ENCODE measurements at regions of chr14 and their contacts with region 1.

Region 1: DNA sequence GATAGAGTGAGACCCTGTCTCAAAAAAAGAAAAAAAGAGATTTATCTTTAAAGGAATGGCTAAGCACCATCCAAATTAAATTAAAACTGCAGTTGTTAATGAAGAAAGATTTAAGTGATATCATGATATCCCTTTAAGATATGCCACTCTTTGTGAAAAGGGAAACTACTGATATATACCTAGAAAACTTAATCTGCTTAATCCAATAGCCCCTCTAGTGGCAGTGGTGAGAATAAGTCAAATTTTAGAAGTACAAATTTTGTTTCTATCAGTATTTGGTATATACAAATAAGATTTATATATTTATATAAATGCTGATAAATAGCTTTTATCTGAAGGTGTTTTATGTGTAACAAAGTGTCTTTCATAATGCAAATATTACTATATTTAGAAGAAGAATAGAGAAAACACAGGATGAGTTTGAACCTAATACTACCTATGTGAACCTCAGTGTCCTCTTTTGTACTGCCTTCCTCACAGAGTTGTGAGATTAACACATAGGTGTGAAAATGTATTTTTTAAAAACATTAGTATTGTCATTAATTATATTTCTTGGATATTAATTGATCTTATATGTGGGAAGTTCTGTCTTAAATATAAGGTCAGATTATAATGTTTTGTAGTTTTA is 51.4 kb upstream of the GARIN2 start:
- DNase-seq: no peak
- H3K4me3 Mint-ChIP-seq: no peak overlapping the region
- H3K27ac Mint-ChIP-seq: no peak overlapping the region
- H3K4me1 Mint-ChIP-seq: peaks cover 28% of the 10 kb centered on the region
- H3K27me3 Mint-ChIP-seq: no peaks in the 10 kb centered on the region

Region 2: GRCh38 chr14:65704850-65705249 is 1433.0 kb before region 1 on chr14:
- CTCF ChIA-PET with region 1: no interaction called
- intact Hi-C with region 1: loop called (anchors 10 kb)
- DNase-seq: peak; percentile 75
- H3K4me3 Mint-ChIP-seq: no peak overlapping the region
- H3K27ac Mint-ChIP-seq: peak overlapping the region; percentile 72
- H3K4me1 Mint-ChIP-seq: peaks cover 12% of the 10 kb centered on the region
- H3K27me3 Mint-ChIP-seq: no peaks in the 10 kb centered on the region

Region 3: DNA sequence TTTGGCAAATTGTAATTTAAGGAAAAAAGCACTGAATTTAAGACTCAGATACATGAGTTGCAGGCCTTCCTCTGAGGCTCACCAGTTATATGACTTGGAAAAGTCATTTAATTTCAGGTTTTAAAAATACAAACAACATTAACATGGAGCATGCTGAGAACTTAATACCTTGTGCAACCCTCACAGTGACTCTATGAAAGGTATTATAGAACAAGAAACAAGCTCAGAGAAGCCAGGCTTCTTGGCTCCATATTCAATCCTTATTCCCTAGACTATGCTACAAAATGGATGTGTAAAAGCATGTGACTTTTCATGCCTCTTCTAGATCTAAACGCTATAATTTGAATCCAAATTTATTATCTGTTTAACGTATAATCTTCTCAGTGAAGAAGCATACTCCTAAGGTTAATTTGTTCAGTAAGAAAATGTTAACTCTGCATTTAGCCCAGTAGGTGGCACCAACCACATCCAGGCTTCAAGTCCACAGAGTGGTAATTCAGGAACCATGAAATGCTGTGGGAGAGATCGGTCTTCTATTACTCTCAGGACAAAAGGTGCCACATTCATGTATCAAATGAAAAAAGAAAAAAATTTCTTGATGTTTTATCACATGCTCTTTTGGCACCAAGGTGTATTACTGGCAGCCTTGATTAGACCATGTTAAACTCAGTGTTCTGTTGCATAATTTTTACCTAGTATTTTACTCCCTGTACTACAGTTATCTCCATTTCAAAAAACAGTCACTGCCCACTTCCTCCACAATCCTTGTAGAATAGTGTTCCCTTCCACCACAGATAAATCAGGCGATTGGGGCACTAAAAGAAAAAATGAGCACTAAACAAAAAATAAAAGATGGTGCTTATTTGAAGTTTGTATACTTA is 642.4 kb before region 1 on chr14:
- CTCF ChIA-PET with region 1: no interaction called
- intact Hi-C with region 1: loop called (anchors 2 kb)
- DNase-seq: peak; percentile 56
- H3K4me3 Mint-ChIP-seq: no peak overlapping the region
- H3K27ac Mint-ChIP-seq: no peak overlapping the region
- H3K4me1 Mint-ChIP-seq: peaks cover 19% of the 10 kb centered on the region
- H3K27me3 Mint-ChIP-seq: no peaks in the 10 kb centered on the region

Region 4: GRCh38 chr14:66624299-66624937 is 513.4 kb before region 1 on chr14:
- CTCF ChIA-PET with region 1: no interaction called
- intact Hi-C with region 1: loop called (anchors 2 kb)
- DNase-seq: peak; percentile 64
- H3K4me3 Mint-ChIP-seq: no peak overlapping the region
- H3K27ac Mint-ChIP-seq: no peak overlapping the region
- H3K4me1 Mint-ChIP-seq: peaks cover 2% of the 10 kb centered on the region
- H3K27me3 Mint-ChIP-seq: no peaks in the 10 kb centered on the region

Region 5: DNA sequence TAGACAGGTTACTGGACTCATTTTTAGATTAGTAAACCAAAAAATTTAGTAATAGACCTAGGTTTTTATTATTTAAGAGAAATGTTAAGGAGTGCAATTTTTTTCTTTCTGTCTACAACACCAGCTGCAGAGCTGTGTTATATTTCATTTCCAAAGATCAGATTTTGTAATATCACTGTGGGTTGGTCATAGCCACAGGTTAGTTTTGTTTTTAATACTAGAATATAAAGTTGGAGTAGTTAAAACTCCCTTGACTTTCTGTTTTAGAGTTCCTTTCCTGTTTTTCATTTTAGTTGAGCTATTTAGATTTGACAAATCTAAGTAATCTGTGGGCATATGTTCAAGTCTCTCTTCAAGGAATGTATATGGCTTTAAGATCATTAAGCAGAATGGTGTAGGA is 20.7 kb after region 1 on chr14:
- CTCF ChIA-PET with region 1: no interaction called
- intact Hi-C with region 1: loop called (anchors 1 kb)
- DNase-seq: no peak
- H3K4me3 Mint-ChIP-seq: no peak overlapping the region
- H3K27ac Mint-ChIP-seq: no peak overlapping the region
- H3K4me1 Mint-ChIP-seq: peaks cover 16% of the 10 kb centered on the region
- H3K27me3 Mint-ChIP-seq: no peaks in the 10 kb centered on the region

Region 6: DNA sequence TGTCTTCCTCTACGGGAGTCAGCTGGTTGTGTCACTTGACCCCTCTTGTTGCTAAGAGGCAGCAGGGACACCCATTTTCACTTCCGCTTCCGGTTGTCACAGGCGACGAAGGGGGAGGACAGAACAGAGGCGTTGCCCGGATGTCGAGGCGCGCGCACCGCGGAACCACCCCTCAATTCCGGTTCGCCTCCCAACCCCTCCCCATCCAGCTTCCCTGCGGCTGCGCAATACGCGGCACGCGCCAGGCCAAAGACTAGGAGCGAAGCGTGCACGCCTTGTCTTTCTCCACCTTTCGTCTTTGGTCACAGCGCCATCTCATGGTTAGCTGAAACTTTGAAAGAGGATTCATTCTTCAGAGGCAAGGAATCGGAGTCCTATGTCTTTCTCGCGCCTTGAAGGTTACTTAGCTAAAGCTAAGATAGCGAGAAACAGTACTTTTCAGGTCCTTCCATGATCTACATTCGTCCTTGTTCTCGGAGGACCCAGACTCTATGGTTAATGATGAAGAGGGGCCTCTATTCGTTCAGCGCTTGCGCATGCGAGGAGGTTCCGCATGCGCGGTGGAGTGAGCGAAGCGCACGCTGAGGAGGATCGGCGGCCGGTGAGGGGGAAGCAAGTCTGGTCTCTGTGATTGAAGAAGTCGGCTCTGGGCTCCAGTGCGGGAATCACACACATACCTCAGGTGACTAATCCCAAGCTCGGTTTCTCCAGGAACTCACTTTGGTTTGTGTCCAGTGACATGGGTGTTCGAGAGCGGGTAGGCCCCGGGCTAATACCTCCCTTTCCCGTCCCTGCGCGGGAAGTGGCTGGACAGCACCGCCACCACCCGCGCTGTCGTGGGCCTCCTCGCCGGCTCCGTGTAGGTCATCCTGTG is 222.2 kb after region 1 on chr14 and contains the starts of genes ATP6V1D and EIF2S1:
- CTCF ChIA-PET with region 1: no interaction called
- intact Hi-C with region 1: loop called (anchors 1 kb)
- DNase-seq: peak; percentile 100
- H3K4me3 Mint-ChIP-seq: peak within 1 kb of the TSS; percentile 98
- H3K27ac Mint-ChIP-seq: peak within 1 kb of the TSS; percentile 95
- H3K4me1 Mint-ChIP-seq: peaks cover 63% of the 10 kb centered on the region
- H3K27me3 Mint-ChIP-seq: no peaks in the 10 kb centered on the region
- total RNA-seq, gene ATP6V1D: 16.5 to 19.9 TPM
- total RNA-seq, gene EIF2S1: 186 to 196 TPM

Measured in activated naive CD4-positive, alpha-beta T cell treated with anti-CD3 and anti-CD28 coated beads for 36 hours (primary cell).